GM23248 (cell line): ENCODE measurements at regions of chr2 and their contacts with region 1.

Region 1: DNA sequence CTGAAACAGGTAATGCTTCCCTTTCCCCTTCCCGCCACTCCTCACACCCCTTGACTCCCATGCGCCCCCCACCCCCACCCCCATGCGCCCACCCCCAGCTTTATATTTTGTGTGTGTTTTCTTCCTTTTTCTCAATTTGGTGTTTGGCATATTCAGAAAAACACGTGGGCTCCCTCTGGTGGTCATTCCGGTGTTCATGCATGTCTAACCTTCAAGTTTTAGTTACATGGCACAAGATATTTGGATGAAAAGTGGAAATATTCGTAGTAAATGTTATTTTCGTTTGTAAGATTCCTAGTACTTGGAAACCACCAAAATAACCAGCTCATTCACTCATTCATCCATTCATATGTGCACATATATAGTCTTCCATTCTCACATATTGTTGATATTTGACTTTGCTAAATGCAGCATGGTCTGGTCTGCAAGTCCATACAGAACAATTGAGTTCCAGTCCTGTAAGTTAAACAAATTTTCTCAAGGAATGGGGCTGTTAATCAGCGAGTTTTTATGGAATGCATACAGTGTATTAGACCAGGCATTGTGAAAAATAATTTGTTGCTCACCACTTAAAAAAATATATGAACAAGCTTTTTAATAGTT is 143.6 kb upstream of the MAP3K20 start:
- DNase-seq: peak; percentile 73
- H3K4me3 ChIP-seq: no peak overlapping the region
- H3K27ac ChIP-seq: no peak overlapping the region
- H3K4me1 ChIP-seq: peaks cover 14% of the 10 kb centered on the region
- H3K27me3 ChIP-seq: no peaks in the 10 kb centered on the region

Region 2: GRCh38 chr2:172813314-172813888 is 118.6 kb before region 1 on chr2:
- in situ Hi-C with region 1: loop called (anchors 10 kb)
- DNase-seq: peak; percentile 36
- H3K4me3 ChIP-seq: no peak overlapping the region
- H3K27ac ChIP-seq: no peak overlapping the region
- H3K4me1 ChIP-seq: no peaks in the 10 kb centered on the region
- H3K27me3 ChIP-seq: no peaks in the 10 kb centered on the region

Region 3: GRCh38 chr2:173171924-173172643 is 240.1 kb after region 1 on chr2:
- in situ Hi-C with region 1: no loop called
- DNase-seq: no peak
- H3K4me3 ChIP-seq: no peak overlapping the region
- H3K27ac ChIP-seq: no peak overlapping the region
- H3K4me1 ChIP-seq: peaks cover 11% of the 10 kb centered on the region; the same call in 1 of the 2 replicates
- H3K27me3 ChIP-seq: no peaks in the 10 kb centered on the region